CD4-positive, alpha-beta memory T cell (primary cell): ENCODE measurements at regions of chr3 and their contacts with region 1.

Region 1: DNA sequence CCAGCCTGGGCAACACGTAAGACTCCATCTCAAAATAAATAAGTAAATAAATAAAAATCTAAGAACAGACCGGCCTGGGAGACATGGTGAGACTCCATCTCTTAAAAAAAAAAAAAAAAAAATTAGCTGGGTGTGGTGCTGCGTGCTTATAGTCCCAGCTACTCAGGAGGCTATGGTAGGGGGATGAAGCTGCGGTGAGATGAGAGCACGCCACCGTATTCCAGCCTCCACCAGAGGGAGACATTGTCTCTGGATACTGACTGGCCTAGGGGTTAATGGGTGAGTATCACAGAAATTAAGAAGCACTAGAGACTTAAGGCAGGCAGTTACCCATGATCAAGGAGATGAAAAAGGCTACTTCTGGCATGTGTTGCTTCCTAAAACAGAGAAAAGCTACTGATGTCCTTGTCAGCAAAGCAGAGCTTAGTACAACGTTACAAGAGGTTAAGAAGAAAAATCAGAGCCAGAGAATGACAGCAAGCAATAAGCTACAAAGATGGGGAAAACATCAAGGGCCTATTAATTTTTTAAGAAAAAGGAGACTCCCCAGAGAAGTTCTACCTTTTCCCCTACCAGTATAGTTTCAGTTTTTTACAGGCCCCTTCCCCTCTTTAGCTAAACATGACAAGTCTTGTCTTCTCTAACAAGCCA is 8.6 kb downstream of the TFRC start:
- DNase-seq: peak; percentile 76 to 80 (median 78)
- H3K4me3 ChIP-seq: no peak overlapping the region
- H3K4me3 Mint-ChIP-seq: peak overlapping the region in 1 of 8 donors; percentile 16
- H3K27ac ChIP-seq: no peak overlapping the region
- H3K27ac Mint-ChIP-seq: peak overlapping the region; percentile 58 to 93 (median 78)
- H3K4me1 ChIP-seq: peaks cover 38% of the 10 kb centered on the region
- H3K4me1 Mint-ChIP-seq: peaks cover 24 to 32% (median 28%) of the 10 kb centered on the region in 4 donors
- H3K27me3 ChIP-seq: no peaks in the 10 kb centered on the region
- H3K27me3 Mint-ChIP-seq: no peaks in the 10 kb centered on the region

Region 2: GRCh38 chr3:196055683-196056270 is 17.5 kb before region 1 on chr3:
- CTCF ChIA-PET with region 1: interaction called, 20 read pairs
- POLR2A ChIA-PET with region 1: interaction called, 4 read pairs
- intact Hi-C with region 1: no loop called
- DNase-seq: no peak
- H3K4me3 ChIP-seq: no peak overlapping the region
- H3K4me3 Mint-ChIP-seq: no peak overlapping the region
- H3K27ac ChIP-seq: no peak overlapping the region
- H3K27ac Mint-ChIP-seq: peak overlapping the region in 1 of 7 donors; percentile 41
- H3K4me1 ChIP-seq: no peaks in the 10 kb centered on the region
- H3K4me1 Mint-ChIP-seq: peaks cover 0 to under 1% (median 0%) of the 10 kb centered on the region in 4 donors
- H3K27me3 ChIP-seq: no peaks in the 10 kb centered on the region
- H3K27me3 Mint-ChIP-seq: no peaks in the 10 kb centered on the region

Region 3: GRCh38 chr3:196168808-196169391 is 95.6 kb after region 1 on chr3:
- CTCF ChIA-PET with region 1: interaction called, 13 read pairs
- POLR2A ChIA-PET with region 1: no interaction called
- intact Hi-C with region 1: no loop called
- DNase-seq: no peak
- H3K4me3 ChIP-seq: no peak overlapping the region
- H3K4me3 Mint-ChIP-seq: no peak overlapping the region
- H3K27ac ChIP-seq: no peak overlapping the region
- H3K27ac Mint-ChIP-seq: no peak overlapping the region
- H3K4me1 ChIP-seq: no peaks in the 10 kb centered on the region
- H3K4me1 Mint-ChIP-seq: peaks cover 0 to 3% (median 2%) of the 10 kb centered on the region in 4 donors
- H3K27me3 ChIP-seq: no peaks in the 10 kb centered on the region
- H3K27me3 Mint-ChIP-seq: no peaks in the 10 kb centered on the region

Region 4: GRCh38 chr3:196186651-196187573 is 113.6 kb after region 1 on chr3:
- CTCF ChIA-PET with region 1: interaction called, 569 read pairs
- POLR2A ChIA-PET with region 1: interaction called, 124 read pairs
- intact Hi-C with region 1: loop called (anchors 1 kb)
- DNase-seq: peak in 1 of 5 donors; percentile 59
- H3K4me3 ChIP-seq: no peak overlapping the region
- H3K4me3 Mint-ChIP-seq: peak overlapping the region; percentile 28 to 89 (median 72)
- H3K27ac ChIP-seq: peak overlapping the region; percentile 63
- H3K27ac Mint-ChIP-seq: peak overlapping the region; percentile 62 to 96 (median 92)
- H3K4me1 ChIP-seq: peaks cover 44% of the 10 kb centered on the region
- H3K4me1 Mint-ChIP-seq: peaks cover 18 to 46% (median 30%) of the 10 kb centered on the region in 4 donors
- H3K27me3 ChIP-seq: no peaks in the 10 kb centered on the region
- H3K27me3 Mint-ChIP-seq: no peaks in the 10 kb centered on the region

Region 5: DNA sequence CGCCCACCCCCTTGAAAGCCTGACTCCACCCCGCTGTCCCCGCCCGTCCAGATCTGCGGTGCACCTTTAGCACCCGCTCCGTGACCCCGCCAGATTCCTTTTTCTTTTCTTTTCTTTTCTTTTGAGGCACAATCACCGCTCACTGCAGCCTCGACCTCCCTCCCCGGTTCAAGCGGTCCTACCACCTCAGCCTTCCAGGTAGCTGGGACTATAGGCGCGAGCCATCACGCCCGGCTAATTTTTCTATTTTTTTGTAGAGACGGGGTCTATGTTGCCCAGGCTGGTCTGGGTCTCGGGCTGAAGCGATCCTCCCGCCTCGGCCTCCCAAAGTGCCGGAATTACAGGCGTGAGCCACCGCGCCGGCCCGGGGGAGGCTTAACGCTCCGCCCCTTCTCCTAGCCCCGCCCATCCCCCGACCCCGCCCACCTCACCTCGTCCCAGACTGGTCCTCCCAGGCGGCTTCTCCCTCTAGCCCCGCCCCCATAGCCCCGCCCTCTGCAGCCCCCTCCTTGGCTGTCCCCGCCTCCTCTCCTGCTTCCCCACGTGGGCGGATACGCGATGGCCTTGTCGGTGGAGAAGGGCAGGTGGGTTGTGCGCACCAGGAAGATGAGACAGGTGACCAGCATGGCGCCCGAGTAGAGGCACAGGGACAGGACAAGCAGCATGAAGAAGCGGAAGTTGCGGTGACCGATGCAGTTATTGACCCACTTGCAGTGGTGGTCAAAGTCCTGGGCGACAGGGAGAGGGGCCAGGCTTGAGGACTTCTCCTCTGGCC is 134.7 kb after region 1 on chr3:
- CTCF ChIA-PET with region 1: interaction called, 569 read pairs
- POLR2A ChIA-PET with region 1: interaction called, 3 read pairs
- intact Hi-C with region 1: no loop called
- DNase-seq: peak; percentile 51 to 84 (median 57)
- H3K4me3 ChIP-seq: peak overlapping the region in 1 of 2 donors; percentile 51
- H3K4me3 Mint-ChIP-seq: peak overlapping the region; percentile 75 to 91 (median 87)
- H3K27ac ChIP-seq: no peak overlapping the region
- H3K27ac Mint-ChIP-seq: peak overlapping the region in 6 of 7 donors; percentile 46 to 89 (median 83)
- H3K4me1 ChIP-seq: peaks cover 11% of the 10 kb centered on the region
- H3K4me1 Mint-ChIP-seq: peaks cover 11 to 23% (median 12%) of the 10 kb centered on the region in 4 donors
- H3K27me3 ChIP-seq: no peaks in the 10 kb centered on the region
- H3K27me3 Mint-ChIP-seq: no peaks in the 10 kb centered on the region